GM12878 (cell line): ENCODE measurements at regions of chr11 and their contacts with region 1.

Region 1: DNA sequence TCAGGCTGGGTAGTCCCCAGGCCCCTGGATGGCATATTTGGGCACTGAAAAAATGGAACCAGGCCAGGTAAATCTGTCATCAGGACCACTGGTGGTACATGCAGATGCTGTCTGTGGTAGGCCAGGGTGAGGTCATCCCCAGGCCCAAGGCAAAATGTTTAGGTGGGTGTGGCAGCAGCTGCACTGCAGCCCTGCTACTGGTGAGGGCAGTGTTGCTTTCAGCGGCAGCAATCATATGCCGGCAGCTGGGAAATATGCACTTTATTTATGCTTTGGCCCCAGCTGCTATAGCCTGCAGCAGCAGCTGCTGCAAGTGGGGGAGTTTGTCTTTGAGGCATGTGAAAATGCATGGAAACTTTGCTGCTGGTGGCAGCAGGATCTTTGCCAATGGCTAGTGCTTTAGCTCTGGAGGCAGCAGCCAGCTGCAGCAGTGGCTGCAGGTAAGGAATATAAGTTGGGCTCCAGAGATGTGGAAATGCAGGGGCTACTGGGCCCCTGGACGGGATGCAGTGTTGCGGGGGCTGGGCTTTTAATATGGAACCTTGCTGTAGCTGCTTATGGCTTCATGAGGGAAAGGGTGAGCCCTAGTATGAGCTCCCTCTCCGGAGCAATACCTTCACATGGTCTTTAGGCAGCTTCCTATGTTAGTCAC is 365.7 kb upstream of the CADM1 start:
- DNase-seq: peak; percentile 51
- ATAC-seq: peak; percentile 87
- H3K4me3 ChIP-seq: no peak overlapping the region
- H3K27ac ChIP-seq: no peak overlapping the region
- H3K4me1 ChIP-seq: peaks cover 49% of the 10 kb centered on the region
- H3K27me3 ChIP-seq: no peaks in the 10 kb centered on the region
- CTCF ChIP-seq: peak; percentile 80 to 90 (median 85)
- EP300 ChIP-seq: peak in 1 of 2 experiments; percentile 24; a peak in 1 of 4 replicates
- POLR2A ChIP-seq: no peak
- RAD21 ChIP-seq: peak; percentile 77

Region 2: DNA sequence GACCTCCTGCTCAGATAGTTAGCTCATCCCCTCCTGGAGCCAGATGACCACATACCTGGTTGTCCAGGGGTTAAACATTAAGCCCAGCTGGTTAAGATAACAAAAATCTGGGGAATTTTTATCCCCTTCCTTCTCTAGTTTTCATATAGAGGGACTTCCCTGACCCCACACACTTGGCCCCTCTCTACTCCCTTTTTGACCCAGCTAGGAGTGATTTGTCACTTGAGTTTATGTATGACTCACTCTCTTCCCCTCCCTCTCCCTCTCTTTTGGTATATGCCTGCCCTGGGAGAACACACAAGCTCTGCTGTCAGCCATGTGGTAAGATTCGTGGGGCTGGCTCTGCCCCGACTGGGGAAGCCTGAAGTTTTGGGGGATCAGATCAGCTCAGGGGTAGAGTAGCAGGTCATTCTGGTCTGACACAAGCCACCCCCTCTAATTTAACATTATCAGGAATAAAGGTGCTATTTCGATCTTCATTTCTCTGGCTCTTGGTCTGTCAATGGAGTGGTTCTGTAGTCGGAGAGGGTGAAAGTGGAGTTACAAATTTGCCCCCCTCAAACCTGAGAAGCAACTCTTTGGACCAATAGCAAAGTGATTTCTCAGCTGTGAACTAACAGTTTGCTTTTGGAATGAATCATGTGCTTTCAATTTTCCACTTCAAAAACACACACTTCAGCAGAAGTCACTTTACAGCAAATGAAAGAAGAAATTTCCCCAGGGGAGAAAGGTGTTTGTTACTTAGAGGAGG is 49.6 kb after region 1 on chr11:
- CTCF ChIA-PET with region 1: interaction called, 64 read pairs
- POLR2A ChIA-PET with region 1: interaction called, 122 read pairs
- RAD21 ChIA-PET with region 1: interaction called, 198 read pairs
- SMC1A ChIA-PET with region 1: interaction called, 325 read pairs
- in situ Hi-C with region 1: no loop called
- intact Hi-C with region 1: loop called (anchors 2 kb)
- DNase-seq: peak; percentile 91
- ATAC-seq: peak; percentile 66
- H3K4me3 ChIP-seq: peak overlapping the region; percentile 15; the same call in 1 of the 2 replicates
- H3K27ac ChIP-seq: peak overlapping the region; percentile 94
- H3K4me1 ChIP-seq: peaks cover 70% of the 10 kb centered on the region
- H3K27me3 ChIP-seq: no peaks in the 10 kb centered on the region
- CTCF ChIP-seq: no peak
- EP300 ChIP-seq: peak; percentile 92 to 93; a peak in 3 of 4 replicates
- POLR2A ChIP-seq: peak; percentile 70
- RAD21 ChIP-seq: peak; percentile 12; the same call in 1 of the 2 replicates

Region 3: GRCh38 chr11:115930886-115931547 is 61.1 kb after region 1 on chr11:
- CTCF ChIA-PET with region 1: interaction called, 48 read pairs
- POLR2A ChIA-PET with region 1: interaction called, 122 read pairs
- RAD21 ChIA-PET with region 1: interaction called, 198 read pairs
- SMC1A ChIA-PET with region 1: interaction called, 325 read pairs
- in situ Hi-C with region 1: no loop called
- intact Hi-C with region 1: no loop called
- DNase-seq: no peak
- ATAC-seq: peak; percentile 56
- H3K4me3 ChIP-seq: no peak overlapping the region
- H3K27ac ChIP-seq: peak overlapping the region; percentile 95
- H3K4me1 ChIP-seq: peaks cover 59% of the 10 kb centered on the region
- H3K27me3 ChIP-seq: no peaks in the 10 kb centered on the region
- CTCF ChIP-seq: no peak
- EP300 ChIP-seq: no peak; a peak in 1 of 4 replicates
- POLR2A ChIP-seq: no peak
- RAD21 ChIP-seq: no peak

Region 4: DNA sequence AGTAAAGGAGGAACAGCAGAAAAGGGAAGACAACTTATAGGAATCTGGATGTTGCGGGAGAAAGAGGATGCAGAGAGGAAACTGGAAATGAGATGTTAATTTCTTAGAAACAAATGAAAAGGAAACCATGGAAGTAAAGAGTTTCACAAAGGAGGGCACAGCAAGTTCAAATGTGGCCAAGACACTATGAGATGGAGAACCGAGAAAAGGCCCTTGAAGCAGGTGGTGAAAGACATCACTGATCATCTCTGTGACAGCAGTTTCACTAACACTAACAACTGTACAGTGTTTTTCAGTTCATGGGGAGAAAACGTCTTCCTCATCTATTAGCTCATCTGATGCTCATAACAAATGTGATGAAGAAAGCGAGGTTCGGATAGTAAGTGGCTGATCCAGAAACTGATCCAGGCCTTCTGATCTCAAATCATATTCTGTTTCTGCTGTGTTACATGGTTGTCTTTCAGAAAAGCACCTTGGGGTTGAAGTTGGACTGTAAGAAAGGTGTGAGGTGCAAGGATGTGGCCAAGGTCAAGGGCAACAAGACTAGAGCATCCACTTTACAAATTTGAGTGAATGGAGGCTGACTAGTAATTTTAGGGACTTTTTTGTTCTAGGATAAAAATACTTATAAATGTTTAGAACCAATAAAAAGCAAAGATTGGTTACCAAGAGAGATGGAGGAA is 126.4 kb after region 1 on chr11:
- CTCF ChIA-PET with region 1: interaction called, 15 read pairs
- POLR2A ChIA-PET with region 1: no interaction called
- RAD21 ChIA-PET with region 1: interaction called, 7 read pairs
- SMC1A ChIA-PET with region 1: interaction called, 21 read pairs
- in situ Hi-C with region 1: no loop called
- intact Hi-C with region 1: loop called (anchors 5 kb)
- DNase-seq: peak; percentile 89
- ATAC-seq: peak; percentile 96
- H3K4me3 ChIP-seq: no peak overlapping the region
- H3K27ac ChIP-seq: peak overlapping the region; percentile 79
- H3K4me1 ChIP-seq: peaks cover 25% of the 10 kb centered on the region
- H3K27me3 ChIP-seq: no peaks in the 10 kb centered on the region
- CTCF ChIP-seq: no peak
- EP300 ChIP-seq: peak; percentile 94 to 95; a peak in 3 of 4 replicates
- POLR2A ChIP-seq: no peak
- RAD21 ChIP-seq: no peak

Region 5: GRCh38 chr11:116276051-116277044 is 406.4 kb after region 1 on chr11:
- CTCF ChIA-PET with region 1: no interaction called
- POLR2A ChIA-PET with region 1: no interaction called
- RAD21 ChIA-PET with region 1: no interaction called
- SMC1A ChIA-PET with region 1: no interaction called
- in situ Hi-C with region 1: no loop called
- intact Hi-C with region 1: loop called (anchors 10 kb)
- DNase-seq: no peak
- ATAC-seq: peak; percentile 97
- H3K4me3 ChIP-seq: no peak overlapping the region
- H3K27ac ChIP-seq: no peak overlapping the region
- H3K4me1 ChIP-seq: no peaks in the 10 kb centered on the region
- H3K27me3 ChIP-seq: no peaks in the 10 kb centered on the region; a peak in 1 of 4 replicates
- CTCF ChIP-seq: peak; percentile 67 to 90 (median 87)
- EP300 ChIP-seq: no peak
- POLR2A ChIP-seq: no peak
- RAD21 ChIP-seq: peak; percentile 92